Left lung (tissue), 14 donors: ENCODE measurements at regions of chr11 and their contacts with region 1.

Region 1: DNA sequence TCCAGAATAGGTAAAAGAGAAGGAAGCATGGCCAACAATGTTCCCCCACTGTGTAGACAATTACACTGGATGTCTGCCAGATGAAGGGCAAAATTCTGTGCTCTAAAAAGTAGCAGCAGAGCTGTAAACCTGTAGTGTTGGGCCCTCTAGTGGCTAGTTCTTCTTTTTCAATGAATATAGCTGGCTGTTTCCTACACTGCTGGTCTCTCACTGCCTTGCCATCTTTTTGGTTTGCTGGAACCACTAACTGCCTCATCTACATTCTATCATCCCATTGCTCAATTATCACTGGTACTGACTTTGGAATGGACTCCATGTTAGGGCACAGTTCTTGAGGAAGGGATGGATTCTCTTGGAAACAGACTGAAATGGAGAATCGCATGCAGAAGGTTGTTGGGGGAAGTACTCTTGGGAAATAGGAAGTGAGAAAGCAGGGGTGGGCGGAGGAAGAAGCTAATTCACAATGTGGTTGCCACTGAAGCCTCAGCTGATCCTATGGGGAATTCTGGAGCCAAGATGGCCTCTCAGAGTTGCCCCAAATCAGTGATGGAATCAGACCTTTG is 17.9 kb downstream of the KCNE3 start:
- DNase-seq: peak in 2 of 4 donors; percentile 67 to 77
- ATAC-seq: peak; percentile 85
- H3K4me3 ChIP-seq: no peak overlapping the region
- H3K27ac ChIP-seq: peak overlapping the region in 1 of 2 donors; percentile 35
- H3K4me1 ChIP-seq: peaks cover 4 to 18% of the 10 kb centered on the region in 2 donors
- H3K27me3 ChIP-seq: no peaks in the 10 kb centered on the region
- CTCF ChIP-seq: peak; percentile 64 to 65

Region 2: DNA sequence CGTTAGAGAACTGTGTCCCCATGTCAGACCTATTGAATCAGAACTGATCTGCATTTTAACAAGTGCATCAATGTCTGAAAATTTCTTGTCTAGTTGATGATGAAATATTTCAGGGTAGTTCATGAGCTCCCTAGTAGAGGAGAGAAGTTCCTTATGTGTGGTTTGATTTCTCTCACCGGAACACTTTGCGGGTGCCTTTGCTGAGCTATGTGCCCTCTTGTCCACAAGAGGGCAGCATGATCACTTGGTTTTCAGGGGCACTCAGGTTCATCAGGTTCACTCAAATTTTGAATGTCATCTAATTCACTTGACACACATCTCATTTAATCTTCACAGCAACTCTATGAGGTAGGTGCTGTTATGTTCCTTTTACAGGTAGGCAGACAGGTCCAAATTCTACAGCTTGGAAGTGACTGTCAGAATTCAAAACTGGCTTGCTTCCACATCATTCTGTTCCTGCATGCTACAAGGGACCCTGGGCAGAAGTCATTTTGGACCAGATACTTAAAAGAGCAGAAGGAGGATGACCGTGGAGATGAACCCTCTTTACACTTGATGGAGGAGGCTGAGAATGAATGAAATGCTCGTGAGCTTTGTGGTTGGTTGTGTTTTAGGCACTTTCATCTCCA is 193.6 kb before region 1 on chr11:
- intact Hi-C with region 1: loop called (anchors 5 to 10 kb)
- DNase-seq: peak in 3 of 4 donors; percentile 42 to 78 (median 59)
- ATAC-seq: peak; percentile 87
- H3K4me3 ChIP-seq: no peak overlapping the region
- H3K27ac ChIP-seq: no peak overlapping the region
- H3K4me1 ChIP-seq: no peaks in the 10 kb centered on the region
- H3K27me3 ChIP-seq: no peaks in the 10 kb centered on the region
- CTCF ChIP-seq: peak; percentile 87 to 92

Region 3: DNA sequence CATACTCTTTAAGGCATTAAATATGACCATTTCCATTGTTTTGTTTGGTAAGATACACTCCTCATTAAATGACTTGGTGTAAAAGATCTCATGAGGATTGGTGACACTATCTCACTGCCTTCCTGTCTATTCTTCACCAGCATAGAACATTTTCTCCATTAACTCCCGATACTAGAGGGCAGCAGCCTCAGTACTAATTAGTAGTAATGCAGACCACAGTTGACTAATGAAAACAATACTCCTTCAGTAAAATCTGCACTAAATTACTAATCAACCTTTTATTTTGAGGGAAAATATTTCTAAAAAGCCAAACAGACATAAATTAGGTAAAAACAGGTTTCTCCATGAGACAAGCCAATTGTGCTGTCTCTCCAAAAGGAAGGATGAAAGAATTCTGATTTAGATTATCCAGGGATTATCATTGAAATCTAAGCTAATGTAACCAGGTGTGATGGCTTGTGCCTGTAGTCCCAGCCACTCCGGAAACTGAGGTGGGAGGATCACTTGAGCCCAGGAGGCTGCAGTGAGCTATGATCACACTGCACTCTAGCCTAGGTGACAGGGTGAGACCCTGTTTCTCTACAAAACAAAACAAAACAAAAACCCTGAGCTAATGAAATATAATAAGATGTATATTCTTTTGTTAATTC is 60.6 kb before region 1 on chr11:
- intact Hi-C with region 1: loop called in 1 of 2 experiments (anchors 5 kb)
- DNase-seq: peak in 3 of 4 donors; percentile 31 to 61 (median 40)
- ATAC-seq: peak; percentile 93
- H3K4me3 ChIP-seq: no peak overlapping the region
- H3K27ac ChIP-seq: no peak overlapping the region
- H3K4me1 ChIP-seq: no peaks in the 10 kb centered on the region
- H3K27me3 ChIP-seq: no peaks in the 10 kb centered on the region
- CTCF ChIP-seq: peak; percentile 58 to 73

Region 4: GRCh38 chr11:74566146-74566960 is 116.9 kb after region 1 on chr11:
- intact Hi-C with region 1: loop called in 1 of 2 experiments (anchors 5 kb)
- DNase-seq: no peak
- ATAC-seq: no peak
- H3K4me3 ChIP-seq: no peak overlapping the region
- H3K27ac ChIP-seq: no peak overlapping the region
- H3K4me1 ChIP-seq: no peaks in the 10 kb centered on the region
- H3K27me3 ChIP-seq: no peaks in the 10 kb centered on the region
- CTCF ChIP-seq: no peak